Left cardiac atrium (tissue), 4 donors: ENCODE measurements at regions of chr2 and their contacts with region 1.

Region 1: DNA sequence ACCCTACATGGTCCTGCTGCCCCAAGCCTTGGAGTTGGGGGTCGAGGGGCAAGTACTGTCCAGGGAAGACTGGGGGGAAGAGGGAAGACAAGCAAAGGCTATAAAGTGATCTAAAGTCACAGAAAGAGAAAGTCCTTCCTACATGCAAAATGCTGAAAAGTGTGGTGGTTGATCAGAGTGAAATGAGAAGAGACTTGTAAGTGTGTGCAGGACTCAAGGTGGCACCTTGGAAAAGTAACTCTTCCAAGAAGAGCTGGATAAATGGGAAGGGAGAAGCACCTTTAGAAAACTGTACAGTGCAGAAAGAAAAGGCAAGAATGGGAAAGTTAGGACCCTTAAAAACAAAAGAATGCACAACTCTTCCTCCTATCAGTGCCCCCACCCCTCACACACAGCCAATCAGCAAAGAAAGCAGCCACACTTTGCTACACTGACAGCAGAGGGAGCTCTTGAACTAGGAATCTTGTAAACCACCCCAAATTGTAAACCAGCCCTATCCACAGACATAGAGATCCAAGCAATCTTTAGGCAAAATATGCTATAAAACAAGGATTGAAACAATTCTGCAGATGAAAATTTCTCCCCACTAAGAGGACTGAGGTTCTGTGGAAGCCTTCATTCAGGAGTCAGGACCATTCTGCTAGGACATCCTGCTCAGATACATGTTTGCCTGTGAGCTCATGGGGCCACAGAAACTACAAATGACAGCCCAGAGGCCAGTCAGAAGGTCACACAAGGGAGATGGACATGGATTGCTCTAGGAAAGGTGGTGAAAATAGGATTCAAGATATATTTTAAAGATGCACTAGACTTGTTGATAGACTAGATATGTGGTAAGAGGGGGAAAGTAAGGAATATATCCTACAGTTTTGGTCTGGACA is 146.4 kb downstream of the FTCDNL1 start:
- DNase-seq: no peak
- ATAC-seq: peak in 1 of 2 donors; percentile 56

Region 2: DNA sequence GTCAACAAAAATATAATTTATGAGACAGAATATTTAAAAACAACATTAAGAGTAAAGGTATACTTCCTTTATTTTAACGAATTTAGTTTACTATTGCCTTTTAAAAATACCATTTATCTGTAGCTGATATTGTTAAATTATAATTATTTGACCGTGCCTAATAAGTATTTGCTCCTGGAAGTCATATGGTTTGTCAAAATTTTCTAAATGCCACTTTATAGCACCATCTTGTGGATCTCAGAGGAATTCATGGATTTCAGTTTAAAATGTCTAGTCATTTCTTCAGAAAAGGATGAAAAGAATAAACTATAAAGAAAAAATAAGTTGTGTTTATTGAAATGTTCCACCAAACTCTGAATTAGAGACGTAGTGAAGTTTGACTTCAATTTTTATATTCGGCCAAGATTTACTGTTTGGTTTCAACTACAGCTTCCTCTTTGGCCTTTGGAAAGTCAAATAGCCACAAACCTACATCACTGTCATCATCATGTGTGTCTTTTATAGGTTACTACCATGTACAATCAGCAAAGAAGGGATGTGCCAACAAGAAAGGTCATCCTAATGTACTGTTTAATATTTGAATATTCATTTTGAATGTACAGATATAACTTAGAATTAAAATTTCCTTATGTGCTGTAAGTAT is 156.7 kb after region 1 on chr2:
- intact Hi-C with region 1: loop called in 1 of 2 experiments (anchors 10 kb)
- DNase-seq: no peak
- ATAC-seq: no peak